AG04450 (cell line): ENCODE measurements at regions of chr12 and their contacts with region 1.

Region 1: DNA sequence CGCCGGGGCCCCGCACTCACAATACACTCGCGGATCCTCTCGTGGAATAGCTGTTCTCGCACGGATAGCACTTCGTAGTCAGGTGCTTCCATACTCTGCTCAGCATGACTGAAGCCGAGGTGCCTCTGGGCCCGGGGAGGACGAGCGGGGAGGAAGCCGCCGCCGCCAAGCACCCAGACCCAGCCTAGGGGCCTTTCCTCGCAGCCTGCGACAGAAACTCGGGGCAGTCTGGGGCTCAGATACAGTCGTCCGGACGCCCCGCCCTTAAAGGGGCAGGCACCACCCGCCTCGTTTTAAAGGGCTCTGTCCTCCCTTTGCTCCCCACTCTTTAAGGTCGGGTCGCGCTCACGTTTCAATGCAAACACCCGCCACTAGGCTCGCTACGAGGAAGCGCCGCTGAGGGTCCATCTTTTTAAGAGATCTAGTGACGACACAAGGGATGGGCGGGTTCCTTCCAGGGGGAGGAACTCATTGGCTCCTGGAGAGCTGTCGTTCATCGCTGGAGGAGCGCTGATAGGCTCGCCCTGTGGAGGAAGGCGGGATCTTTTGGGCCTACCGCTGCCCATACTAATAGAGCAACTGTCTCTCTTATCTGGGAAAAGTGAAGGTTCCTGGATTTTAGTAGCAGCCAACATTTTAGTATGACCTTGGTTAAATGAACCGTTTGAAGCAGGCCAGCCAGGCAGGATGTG is at the start of gene LMBR1L:
- DNase-seq: peak; percentile 95
- H3K4me3 ChIP-seq: peak within 1 kb of the TSS; percentile 82
- H3K27ac ChIP-seq: peak within 1 kb of the TSS; percentile 87
- H3K27me3 ChIP-seq: no peaks in the 10 kb centered on the region
- CTCF ChIP-seq: peak; percentile 59
- polyA plus RNA-seq, gene LMBR1L: 34.1 and 37.3 TPM in 2 replicates

Region 2: DNA sequence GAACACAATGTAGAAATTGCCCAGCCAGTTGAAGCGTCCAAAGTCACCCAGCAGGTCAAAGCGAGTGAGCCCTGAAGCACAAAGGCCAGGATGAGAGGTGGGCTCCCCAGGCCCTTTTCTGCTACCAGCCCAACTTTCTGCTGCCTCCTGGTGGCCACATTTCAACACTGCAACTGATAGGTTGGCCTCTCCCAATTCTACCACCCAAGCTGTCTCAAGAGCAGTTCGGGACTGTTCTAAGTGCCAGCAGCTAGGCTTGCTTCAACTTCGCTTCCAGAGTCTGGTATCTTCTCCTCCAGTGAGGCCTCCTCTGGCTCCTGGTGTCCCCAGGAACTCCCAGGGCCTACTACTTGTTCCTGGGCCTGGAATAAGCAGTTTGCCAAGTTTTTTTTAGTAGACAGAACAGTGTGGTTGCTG is 12.6 kb before region 1 on chr12:
- CTCF ChIA-PET with region 1: interaction called, 12 read pairs
- POLR2A ChIA-PET with region 1: interaction called, 11 read pairs
- DNase-seq: no peak
- H3K4me3 ChIP-seq: no peak overlapping the region
- H3K27ac ChIP-seq: no peak overlapping the region
- H3K27me3 ChIP-seq: peaks cover 5% of the 10 kb centered on the region
- CTCF ChIP-seq: peak; percentile 81

Region 3: DNA sequence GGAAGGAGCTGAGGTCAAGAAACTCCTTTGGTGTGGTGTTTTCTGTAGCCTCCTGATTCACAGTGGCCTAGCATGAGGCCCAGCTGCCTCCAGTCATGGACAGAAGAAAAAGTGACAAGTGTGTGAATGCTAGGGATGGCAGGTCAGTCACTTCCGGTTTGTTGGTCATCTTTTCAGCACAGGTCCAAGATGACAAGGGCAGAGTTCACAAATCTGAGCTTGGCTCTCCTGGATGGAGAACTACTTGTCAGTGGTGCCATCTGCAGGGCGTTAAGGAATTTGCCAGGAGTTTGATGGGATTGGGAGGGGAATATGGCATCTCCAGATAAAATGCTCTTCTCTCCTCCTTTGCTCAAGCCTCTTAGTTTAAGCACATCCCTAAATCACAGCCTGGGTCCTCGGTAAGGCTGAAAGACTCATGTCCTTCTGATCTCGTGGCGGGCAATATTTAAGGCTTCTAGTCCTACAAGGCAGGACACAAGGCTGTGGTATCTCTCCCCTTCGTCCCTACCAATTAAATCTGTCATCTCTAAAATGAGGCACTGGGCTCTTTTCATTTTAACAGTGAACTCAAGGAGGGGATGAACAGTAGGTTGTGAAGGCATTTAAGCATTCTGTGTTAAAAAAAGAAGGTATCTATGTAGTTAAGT is 10.6 kb after region 1 on chr12:
- CTCF ChIA-PET with region 1: interaction called, 18 read pairs
- POLR2A ChIA-PET with region 1: no interaction called
- DNase-seq: no peak
- H3K4me3 ChIP-seq: no peak overlapping the region
- H3K27ac ChIP-seq: no peak overlapping the region
- H3K27me3 ChIP-seq: no peaks in the 10 kb centered on the region
- CTCF ChIP-seq: peak; percentile 76